WTC11 (cell line): ENCODE measurements at regions of chr7 and their contacts with region 1.

Region 1: GRCh38 chr7:30062591-30062990 is 34.4 kb downstream of the PLEKHA8 start:
- DNase-seq: no peak
- ATAC-seq: 0 out of 2 replicates have a peak, but pooled peaks have one; percentile 39
- H3K4me3 Mint-ChIP-seq: no peak overlapping the region
- H3K27ac Mint-ChIP-seq: no peak overlapping the region
- H3K4me1 Mint-ChIP-seq: no peaks in the 10 kb centered on the region
- H3K27me3 Mint-ChIP-seq: no peaks in the 10 kb centered on the region
- CTCF ChIP-seq: no peak; the same call in none of the 2 replicates

Region 2: GRCh38 chr7:29921404-29922010 is 141.1 kb before region 1 on chr7:
- CTCF ChIA-PET with region 1: interaction called, 12 read pairs
- POLR2A ChIA-PET with region 1: no interaction called
- DNase-seq: peak; percentile 63
- ATAC-seq: peak; percentile 94
- H3K4me3 Mint-ChIP-seq: no peak overlapping the region
- H3K27ac Mint-ChIP-seq: no peak overlapping the region
- H3K4me1 Mint-ChIP-seq: no peaks in the 10 kb centered on the region
- H3K27me3 Mint-ChIP-seq: no peaks in the 10 kb centered on the region
- CTCF ChIP-seq: peak; percentile 85; the same call in 1 of the 2 replicates

Region 3: DNA sequence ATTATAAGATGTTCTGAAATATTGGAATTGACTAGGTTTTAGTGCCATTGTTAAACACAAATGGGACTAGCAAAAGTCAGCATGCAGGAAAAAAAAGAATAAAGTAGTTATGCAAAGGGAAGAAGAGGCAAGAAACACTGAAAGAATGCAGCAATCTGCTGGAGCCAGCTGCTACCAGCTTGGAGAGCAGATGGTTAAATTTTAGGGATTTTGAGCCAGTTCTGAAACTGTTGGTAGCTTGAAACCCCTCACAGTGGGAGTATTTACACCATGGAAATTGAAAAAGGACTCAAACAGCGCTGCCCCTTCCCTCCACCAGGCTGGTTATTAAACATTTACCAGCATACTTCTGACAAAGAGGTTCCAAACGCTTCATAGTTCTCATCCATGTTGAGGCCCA is 114.0 kb before region 1 on chr7:
- CTCF ChIA-PET with region 1: interaction called, 19 read pairs
- POLR2A ChIA-PET with region 1: no interaction called
- DNase-seq: no peak
- ATAC-seq: no peak
- H3K4me3 Mint-ChIP-seq: no peak overlapping the region
- H3K27ac Mint-ChIP-seq: no peak overlapping the region
- H3K4me1 Mint-ChIP-seq: no peaks in the 10 kb centered on the region
- H3K27me3 Mint-ChIP-seq: no peaks in the 10 kb centered on the region
- CTCF ChIP-seq: no peak

Region 4: GRCh38 chr7:29955799-29956486 is 106.6 kb before region 1 on chr7:
- CTCF ChIA-PET with region 1: interaction called, 19 read pairs
- POLR2A ChIA-PET with region 1: no interaction called
- DNase-seq: no peak
- ATAC-seq: no peak
- H3K4me3 Mint-ChIP-seq: no peak overlapping the region
- H3K27ac Mint-ChIP-seq: peak overlapping the region; percentile 51
- H3K4me1 Mint-ChIP-seq: peaks cover 36% of the 10 kb centered on the region
- H3K27me3 Mint-ChIP-seq: no peaks in the 10 kb centered on the region
- CTCF ChIP-seq: no peak

Region 5: GRCh38 chr7:30028193-30028748 is 34.3 kb before region 1 on chr7 and contains the start of gene PLEKHA8:
- CTCF ChIA-PET with region 1: interaction called, 20 read pairs
- POLR2A ChIA-PET with region 1: no interaction called
- DNase-seq: peak; percentile 93
- ATAC-seq: peak; percentile 65
- H3K4me3 Mint-ChIP-seq: no peak within 1 kb of the TSS; the same call in 1 of the 2 replicates
- H3K27ac Mint-ChIP-seq: peak within 1 kb of the TSS; percentile 98
- H3K4me1 Mint-ChIP-seq: peaks cover 31% of the 10 kb centered on the region
- H3K27me3 Mint-ChIP-seq: no peaks in the 10 kb centered on the region
- CTCF ChIP-seq: no peak
- total RNA-seq, gene PLEKHA8: 38.1 to 40.1 TPM (median 38.6 TPM) in 3 replicates

Region 6: GRCh38 chr7:30041521-30042269 is 20.9 kb before region 1 on chr7:
- CTCF ChIA-PET with region 1: interaction called, 19 read pairs
- POLR2A ChIA-PET with region 1: no interaction called
- DNase-seq: no peak
- ATAC-seq: peak; percentile 65
- H3K4me3 Mint-ChIP-seq: no peak overlapping the region
- H3K27ac Mint-ChIP-seq: peak overlapping the region; percentile 50
- H3K4me1 Mint-ChIP-seq: peaks cover 43% of the 10 kb centered on the region
- H3K27me3 Mint-ChIP-seq: no peaks in the 10 kb centered on the region
- CTCF ChIP-seq: no peak

Region 7: GRCh38 chr7:30074422-30075030 is 11.9 kb after region 1 on chr7:
- CTCF ChIA-PET with region 1: interaction called, 26 read pairs
- POLR2A ChIA-PET with region 1: no interaction called
- DNase-seq: no peak
- ATAC-seq: peak; percentile 36; the same call in 1 of the 2 replicates
- H3K4me3 Mint-ChIP-seq: no peak overlapping the region
- H3K27ac Mint-ChIP-seq: no peak overlapping the region
- H3K4me1 Mint-ChIP-seq: peaks cover 7% of the 10 kb centered on the region
- H3K27me3 Mint-ChIP-seq: no peaks in the 10 kb centered on the region
- CTCF ChIP-seq: no peak

Region 8: DNA sequence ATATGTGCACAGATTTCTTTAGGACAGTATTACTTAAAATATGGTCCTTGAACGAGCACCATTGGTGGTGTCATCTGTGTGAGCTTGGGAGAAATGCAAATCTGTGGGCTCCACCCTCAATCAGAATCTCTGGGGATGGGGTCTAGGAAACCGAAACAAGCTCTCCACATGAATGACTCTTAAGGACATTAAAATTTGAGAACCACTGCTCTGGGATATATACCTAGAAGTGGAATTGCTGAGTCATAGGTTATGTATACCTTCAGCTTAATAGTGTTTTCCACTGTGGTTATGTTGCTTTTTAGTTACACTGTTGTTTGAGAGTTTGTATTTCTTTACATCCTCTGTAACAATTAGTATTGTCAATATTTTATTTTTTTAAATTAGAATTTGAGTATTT is 245.8 kb after region 1 on chr7:
- CTCF ChIA-PET with region 1: no interaction called
- POLR2A ChIA-PET with region 1: no interaction called
- DNase-seq: no peak
- ATAC-seq: peak; percentile 43; the same call in 1 of the 2 replicates
- H3K4me3 Mint-ChIP-seq: no peak overlapping the region
- H3K27ac Mint-ChIP-seq: no peak overlapping the region
- H3K4me1 Mint-ChIP-seq: peaks cover 60% of the 10 kb centered on the region
- H3K27me3 Mint-ChIP-seq: no peaks in the 10 kb centered on the region
- CTCF ChIP-seq: no peak